Naive thymus-derived CD4-positive, alpha-beta T cell (primary cell): ENCODE measurements at regions of chr9 and their contacts with region 1.

Region 1: GRCh38 chr9:129177791-129178559 is at the start of gene IER5L:
- DNase-seq: peak; percentile 89 to 97 (median 93)
- ATAC-seq: peak; percentile 94
- H3K4me3 ChIP-seq: peak within 1 kb of the TSS; percentile 86
- H3K4me3 Mint-ChIP-seq: peak within 1 kb of the TSS; percentile 90 to 96 (median 92)
- H3K27ac ChIP-seq: peak within 1 kb of the TSS; percentile 59
- H3K27ac Mint-ChIP-seq: peak within 1 kb of the TSS in 7 of 9 donors; percentile 43 to 81 (median 62)
- H3K4me1 ChIP-seq: peaks cover 0 to 4% of the 10 kb centered on the region in 2 donors
- H3K4me1 Mint-ChIP-seq: peaks cover 0 to 17% (median 5%) of the 10 kb centered on the region in 7 donors
- H3K27me3 ChIP-seq: no peaks in the 10 kb centered on the region
- H3K27me3 Mint-ChIP-seq: peaks cover 0 to 7% (median 0%) of the 10 kb centered on the region in 5 donors
- total RNA-seq, gene IER5L: 3.4 to 6.8 (median 3.8) TPM

Region 2: DNA sequence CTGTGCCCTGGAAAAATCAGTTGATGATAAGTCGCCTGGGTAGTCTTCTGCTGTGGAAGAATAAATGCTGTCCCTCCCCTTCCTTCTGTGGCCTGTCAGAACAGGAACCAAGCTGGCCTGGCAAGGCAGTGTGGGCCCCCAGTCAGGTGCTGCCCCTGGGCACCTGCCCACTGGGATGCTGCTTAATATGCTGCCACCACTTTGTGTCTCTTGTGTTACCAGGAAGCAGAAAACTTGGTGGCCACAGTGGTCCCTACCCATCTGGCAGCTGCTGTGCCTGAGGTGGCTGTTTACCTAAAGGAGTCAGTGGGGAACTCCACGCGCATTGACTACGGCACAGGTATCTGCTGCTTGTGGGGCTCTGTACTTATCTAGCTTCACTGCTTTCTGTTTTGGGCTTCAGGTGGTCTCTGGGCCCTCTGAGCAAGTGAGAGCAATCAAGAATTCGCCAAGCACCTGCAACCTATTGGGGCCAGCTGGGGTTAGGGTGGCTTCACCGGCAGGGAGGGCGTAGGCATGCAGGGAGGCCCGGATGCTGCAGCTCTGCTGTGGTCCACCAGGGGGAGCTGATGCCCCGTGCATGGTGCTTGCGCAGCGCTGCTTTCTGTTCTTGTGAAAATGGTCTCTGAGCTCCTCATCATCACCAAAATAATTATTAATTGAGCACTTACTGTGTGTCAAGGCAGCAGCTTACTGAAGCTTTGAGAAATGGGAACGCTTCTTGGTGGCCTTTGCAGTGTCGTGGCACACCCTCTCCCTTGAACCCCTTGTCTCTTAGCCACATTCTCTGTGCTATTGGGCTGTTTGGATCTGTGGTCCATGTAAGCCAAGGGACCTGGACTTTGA is 46.5 kb before region 1 on chr9:
- CTCF ChIA-PET with region 1: interaction called, 23 read pairs
- POLR2A ChIA-PET with region 1: no interaction called
- intact Hi-C with region 1: no loop called
- DNase-seq: peak; percentile 71 to 90 (median 81)
- ATAC-seq: peak; percentile 100
- H3K4me3 ChIP-seq: no peak overlapping the region
- H3K4me3 Mint-ChIP-seq: peak overlapping the region in 2 of 10 donors; percentile 10 to 23
- H3K27ac ChIP-seq: peak overlapping the region; percentile 24
- H3K27ac Mint-ChIP-seq: peak overlapping the region in 6 of 9 donors; percentile 11 to 54 (median 46)
- H3K4me1 ChIP-seq: no peaks in the 10 kb centered on the region
- H3K4me1 Mint-ChIP-seq: peaks cover 0 to 9% (median 6%) of the 10 kb centered on the region in 7 donors
- H3K27me3 ChIP-seq: no peaks in the 10 kb centered on the region
- H3K27me3 Mint-ChIP-seq: no peaks in the 10 kb centered on the region

Region 3: DNA sequence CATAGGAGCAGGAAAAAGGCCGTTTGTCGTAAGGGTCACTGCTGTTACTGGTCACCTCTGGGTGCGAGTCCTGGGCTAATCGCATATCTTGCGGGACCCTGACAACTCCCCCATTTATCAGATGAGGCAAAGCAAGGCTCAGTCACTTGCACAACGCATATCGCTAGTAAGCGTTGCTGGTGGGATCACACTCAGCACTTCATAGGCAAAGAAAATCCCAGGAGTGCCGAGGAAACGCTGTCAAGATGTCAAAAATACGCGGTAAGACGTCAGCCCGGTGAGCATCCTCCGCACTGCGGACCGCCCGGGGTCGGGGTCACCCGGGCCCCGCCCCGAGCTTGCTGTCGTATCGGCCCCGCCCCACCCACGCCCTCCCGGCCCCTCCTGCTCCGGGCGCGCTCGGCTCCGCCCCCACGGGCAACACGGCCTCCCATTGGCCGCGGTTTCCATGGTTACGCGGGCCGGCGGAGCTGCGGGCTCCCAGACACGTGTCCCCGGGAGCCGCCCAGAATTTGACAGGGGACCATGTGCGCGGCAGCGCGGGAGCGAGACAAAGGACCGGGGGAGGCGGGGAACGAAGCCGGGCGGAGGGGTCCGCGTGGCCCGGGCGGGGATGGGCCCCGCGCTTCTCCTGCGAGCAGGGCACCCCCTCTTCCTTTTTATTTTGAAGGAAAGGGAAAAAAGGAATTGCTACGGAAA is 80.3 kb after region 1 on chr9:
- CTCF ChIA-PET with region 1: interaction called, 3 read pairs
- POLR2A ChIA-PET with region 1: interaction called, 4 read pairs
- intact Hi-C with region 1: loop called (anchors 1 kb)
- DNase-seq: peak; percentile 81 to 91 (median 86)
- ATAC-seq: peak; percentile 97
- H3K4me3 ChIP-seq: peak overlapping the region; percentile 43
- H3K4me3 Mint-ChIP-seq: peak overlapping the region; percentile 45 to 91 (median 83)
- H3K27ac ChIP-seq: no peak overlapping the region
- H3K27ac Mint-ChIP-seq: peak overlapping the region in 8 of 9 donors; percentile 15 to 89 (median 62)
- H3K4me1 ChIP-seq: peaks cover 12 to 18% of the 10 kb centered on the region in 2 donors
- H3K4me1 Mint-ChIP-seq: peaks cover 16 to 48% (median 41%) of the 10 kb centered on the region in 7 donors
- H3K27me3 ChIP-seq: no peaks in the 10 kb centered on the region
- H3K27me3 Mint-ChIP-seq: peaks cover 0 to 48% (median 0%) of the 10 kb centered on the region in 5 donors

Region 4: GRCh38 chr9:129346046-129346445 is 168.1 kb after region 1 on chr9:
- CTCF ChIA-PET with region 1: interaction called, 3 read pairs
- POLR2A ChIA-PET with region 1: no interaction called
- intact Hi-C with region 1: loop called in 1 of 2 experiments (anchors 1 kb)
- DNase-seq: no peak
- ATAC-seq: no peak
- H3K4me3 ChIP-seq: no peak overlapping the region
- H3K4me3 Mint-ChIP-seq: no peak overlapping the region
- H3K27ac ChIP-seq: no peak overlapping the region
- H3K27ac Mint-ChIP-seq: no peak overlapping the region
- H3K4me1 ChIP-seq: no peaks in the 10 kb centered on the region
- H3K4me1 Mint-ChIP-seq: peaks cover 0 to 14% (median 6%) of the 10 kb centered on the region in 7 donors
- H3K27me3 ChIP-seq: no peaks in the 10 kb centered on the region
- H3K27me3 Mint-ChIP-seq: peaks cover 0 to 7% (median 0%) of the 10 kb centered on the region in 5 donors

Region 5: GRCh38 chr9:129487642-129488409 is 309.9 kb after region 1 on chr9:
- CTCF ChIA-PET with region 1: interaction called, 3 read pairs
- POLR2A ChIA-PET with region 1: interaction called, 5 read pairs
- intact Hi-C with region 1: loop called (anchors 5 kb)
- DNase-seq: peak in 5 of 9 donors; percentile 29 to 54 (median 43)
- ATAC-seq: peak; percentile 3
- H3K4me3 ChIP-seq: peak overlapping the region; percentile 70
- H3K4me3 Mint-ChIP-seq: peak overlapping the region; percentile 75 to 92 (median 90)
- H3K27ac ChIP-seq: peak overlapping the region; percentile 66
- H3K27ac Mint-ChIP-seq: peak overlapping the region; percentile 87 to 99 (median 94)
- H3K4me1 ChIP-seq: peaks cover 32 to 46% of the 10 kb centered on the region in 2 donors
- H3K4me1 Mint-ChIP-seq: peaks cover 36 to 68% (median 58%) of the 10 kb centered on the region in 7 donors
- H3K27me3 ChIP-seq: no peaks in the 10 kb centered on the region
- H3K27me3 Mint-ChIP-seq: no peaks in the 10 kb centered on the region